B cell (primary cell): ENCODE measurements at regions of chr16 and their contacts with region 1.

Region 1: GRCh38 chr16:25257504-25257955 is at the start of gene ZKSCAN2:
- DNase-seq: peak; percentile 91
- ATAC-seq: peak; percentile 90
- H3K4me3 ChIP-seq: peak within 1 kb of the TSS; percentile 57 to 81 (median 79)
- H3K4me3 Mint-ChIP-seq: peak within 1 kb of the TSS; percentile 98
- H3K27ac ChIP-seq: peak within 1 kb of the TSS; percentile 79 to 92
- H3K27ac Mint-ChIP-seq: peak within 1 kb of the TSS; percentile 98
- H3K4me1 ChIP-seq: peaks cover 20 to 28% of the 10 kb centered on the region in 2 donors
- H3K4me1 Mint-ChIP-seq: peaks cover 38% of the 10 kb centered on the region
- H3K27me3 ChIP-seq: no peaks in the 10 kb centered on the region
- H3K27me3 Mint-ChIP-seq: no peaks in the 10 kb centered on the region
- CTCF ChIP-seq: no peak
- total RNA-seq, gene ZKSCAN2: 9.0 and 9.1 TPM in 2 replicates

Region 2: DNA sequence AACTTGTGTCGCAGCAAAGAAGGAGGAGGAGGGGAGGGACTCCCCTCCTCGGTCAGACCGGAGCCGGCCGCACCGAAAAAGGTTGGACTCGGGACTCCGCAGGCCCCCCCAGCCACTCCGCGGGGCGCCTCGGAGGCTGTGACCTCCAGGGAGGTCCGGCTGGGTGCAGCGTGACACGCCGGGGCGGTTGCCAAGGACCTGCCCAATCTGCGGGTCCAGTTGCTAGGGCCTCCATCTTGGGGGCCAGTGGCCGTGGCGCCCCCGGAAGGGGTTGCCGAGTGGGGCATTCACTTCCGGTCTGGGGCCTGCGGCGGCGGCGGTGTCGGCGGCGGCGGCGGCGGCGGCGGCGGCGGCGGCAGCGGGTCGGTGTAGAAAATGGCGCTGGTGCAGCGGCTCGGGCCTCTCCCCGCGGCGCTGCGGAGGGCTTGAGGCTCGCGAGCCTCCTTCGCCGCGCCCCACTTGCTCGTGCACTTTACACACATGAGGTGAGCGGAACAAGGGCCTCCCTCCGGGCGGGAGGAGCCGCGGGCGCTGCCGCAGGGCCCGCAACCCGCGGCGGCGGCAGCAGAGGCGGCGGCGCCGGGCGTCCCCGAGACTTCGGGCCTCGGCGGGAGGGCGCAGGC is 528.1 kb before region 1 on chr16 and contains the start of gene TNRC6A:
- CTCF ChIA-PET with region 1: no interaction called
- POLR2A ChIA-PET with region 1: no interaction called
- intact Hi-C with region 1: loop called (anchors 2 kb)
- DNase-seq: peak; percentile 96
- ATAC-seq: peak; percentile 84
- H3K4me3 ChIP-seq: peak within 1 kb of the TSS; percentile 80 to 97 (median 81)
- H3K4me3 Mint-ChIP-seq: peak within 1 kb of the TSS; percentile 96
- H3K27ac ChIP-seq: peak within 1 kb of the TSS; percentile 98
- H3K27ac Mint-ChIP-seq: peak within 1 kb of the TSS; percentile 98
- H3K4me1 ChIP-seq: peaks cover 12 to 16% of the 10 kb centered on the region in 2 donors
- H3K4me1 Mint-ChIP-seq: peaks cover 37% of the 10 kb centered on the region
- H3K27me3 ChIP-seq: no peaks in the 10 kb centered on the region
- H3K27me3 Mint-ChIP-seq: no peaks in the 10 kb centered on the region
- CTCF ChIP-seq: no peak
- total RNA-seq, gene TNRC6A: 96.7 and 104 TPM in 2 replicates

Region 3: DNA sequence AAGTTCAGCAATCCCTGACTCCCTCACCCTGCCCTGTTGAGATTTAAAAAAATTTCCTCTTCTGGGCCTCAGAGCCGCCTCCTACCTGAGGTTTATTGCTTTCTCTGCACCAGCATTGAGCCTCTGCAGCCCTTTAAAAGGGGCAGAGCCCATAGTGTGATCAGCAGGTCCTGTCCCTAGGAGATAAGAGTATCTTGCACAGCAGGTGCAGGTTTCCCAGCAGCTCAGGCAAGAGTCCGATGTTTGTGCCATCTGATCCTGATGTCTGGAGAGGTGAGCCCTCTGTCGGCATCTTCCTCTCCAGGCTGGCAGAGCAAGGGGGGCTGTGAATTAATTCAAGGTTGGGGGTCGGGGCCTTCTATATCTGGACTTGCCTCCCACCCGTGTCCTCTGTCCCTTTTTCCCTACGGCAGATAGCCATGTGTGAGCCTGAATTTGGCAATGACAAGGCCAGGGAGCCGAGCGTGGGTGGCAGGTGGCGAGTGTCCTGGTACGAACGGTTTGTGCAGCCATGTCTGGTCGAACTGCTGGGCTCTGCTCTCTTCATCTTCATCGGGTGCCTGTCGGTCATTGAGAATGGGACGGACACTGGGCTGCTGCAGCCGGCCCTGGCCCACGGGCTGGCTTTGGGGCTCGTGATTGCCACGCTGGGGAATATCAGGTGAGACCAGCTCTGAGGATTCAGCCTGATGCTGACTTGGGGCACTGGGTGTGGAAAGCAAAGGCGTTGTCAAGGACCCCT is 40.6 kb before region 1 on chr16 and contains the start of gene AQP8:
- CTCF ChIA-PET with region 1: no interaction called
- POLR2A ChIA-PET with region 1: no interaction called
- intact Hi-C with region 1: no loop called
- DNase-seq: no peak
- ATAC-seq: no peak
- H3K4me3 ChIP-seq: no peak within 1 kb of the TSS
- H3K4me3 Mint-ChIP-seq: no peak within 1 kb of the TSS
- H3K27ac ChIP-seq: no peak within 1 kb of the TSS
- H3K27ac Mint-ChIP-seq: no peak within 1 kb of the TSS
- H3K4me1 ChIP-seq: no peaks in the 10 kb centered on the region
- H3K4me1 Mint-ChIP-seq: no peaks in the 10 kb centered on the region
- H3K27me3 ChIP-seq: no peaks in the 10 kb centered on the region
- H3K27me3 Mint-ChIP-seq: peaks cover 14% of the 10 kb centered on the region
- CTCF ChIP-seq: no peak
- total RNA-seq, gene AQP8: not detected in 2 replicates